ENCODE measurements at regions of chr1 and their contacts with region 1.

Region 1: DNA sequence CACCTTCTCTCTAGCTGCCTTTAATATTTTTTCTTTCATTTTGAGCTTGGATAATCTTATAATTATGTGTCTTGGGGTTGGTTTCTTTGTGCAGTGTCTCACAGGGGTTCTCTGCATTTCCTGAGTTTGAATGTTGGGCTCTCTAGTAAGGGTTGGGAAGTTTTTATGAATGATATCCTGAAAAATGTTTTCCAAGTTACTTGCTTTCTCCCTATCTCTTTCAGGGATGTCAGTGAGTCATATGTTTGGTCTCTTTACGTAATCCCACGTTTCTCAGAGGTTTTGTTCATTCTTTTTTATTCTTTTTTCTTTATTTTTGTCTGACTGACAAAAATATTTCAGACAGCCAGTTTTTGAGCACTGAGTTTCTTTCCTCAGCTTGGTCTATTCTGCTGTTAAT is 55.4 kb upstream of the CCDC190 start:
- DNase-seq: no peak
- H3K4me3 ChIP-seq: no peak overlapping the region
- H3K27ac ChIP-seq: peak overlapping the region; percentile 53 to 99
- H3K4me1 ChIP-seq: peaks cover 0 to 34% of the 10 kb centered on the region in 2 experiments; a peak in 2 of 4 replicates
- H3K27me3 ChIP-seq: no peaks in the 10 kb centered on the region
- CTCF ChIP-seq: no peak
- EP300 ChIP-seq: no peak
- RAD21 ChIP-seq: no peak

Region 2: DNA sequence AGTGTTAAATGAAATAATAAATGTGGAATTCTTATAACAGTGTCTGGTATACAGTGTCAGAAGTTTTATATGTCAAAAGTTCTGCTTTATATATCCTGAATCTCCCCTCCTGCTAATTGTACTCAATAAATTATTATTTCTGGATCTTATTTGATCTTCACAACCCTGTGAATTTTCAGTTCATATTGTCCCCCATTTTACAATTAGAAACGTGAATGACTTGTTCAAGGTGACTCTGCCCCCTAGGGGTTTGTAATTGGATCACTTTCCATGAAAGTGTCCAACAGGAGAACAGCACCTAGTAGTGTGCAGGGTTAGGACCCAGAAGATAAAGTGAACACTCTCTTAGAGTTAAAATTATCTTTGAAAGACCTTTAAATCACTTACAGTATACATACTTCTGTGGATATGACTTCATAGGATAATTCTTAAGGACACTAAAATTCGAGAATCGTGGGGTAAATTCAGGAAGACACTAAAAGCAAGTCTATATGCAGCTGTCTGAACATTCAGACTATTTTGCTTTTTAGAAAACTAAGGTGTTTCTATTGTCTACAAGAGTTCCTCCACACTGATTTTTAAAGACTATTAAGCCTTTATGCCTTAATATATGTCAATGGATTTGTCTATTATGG is 288.6 kb before region 1 on chr1:
- CTCF ChIA-PET with region 1: no interaction called
- POLR2A ChIA-PET with region 1: no interaction called
- DNase-seq: no peak
- H3K4me3 ChIP-seq: no peak overlapping the region
- H3K27ac ChIP-seq: peak overlapping the region in 1 of 2 experiments; percentile 18; a peak in 1 of 4 replicates
- H3K4me1 ChIP-seq: peaks cover 39 to 44% of the 10 kb centered on the region in 2 experiments
- H3K27me3 ChIP-seq: no peaks in the 10 kb centered on the region
- CTCF ChIP-seq: peak; percentile 71
- EP300 ChIP-seq: no peak
- RAD21 ChIP-seq: peak; percentile 58

Region 3: DNA sequence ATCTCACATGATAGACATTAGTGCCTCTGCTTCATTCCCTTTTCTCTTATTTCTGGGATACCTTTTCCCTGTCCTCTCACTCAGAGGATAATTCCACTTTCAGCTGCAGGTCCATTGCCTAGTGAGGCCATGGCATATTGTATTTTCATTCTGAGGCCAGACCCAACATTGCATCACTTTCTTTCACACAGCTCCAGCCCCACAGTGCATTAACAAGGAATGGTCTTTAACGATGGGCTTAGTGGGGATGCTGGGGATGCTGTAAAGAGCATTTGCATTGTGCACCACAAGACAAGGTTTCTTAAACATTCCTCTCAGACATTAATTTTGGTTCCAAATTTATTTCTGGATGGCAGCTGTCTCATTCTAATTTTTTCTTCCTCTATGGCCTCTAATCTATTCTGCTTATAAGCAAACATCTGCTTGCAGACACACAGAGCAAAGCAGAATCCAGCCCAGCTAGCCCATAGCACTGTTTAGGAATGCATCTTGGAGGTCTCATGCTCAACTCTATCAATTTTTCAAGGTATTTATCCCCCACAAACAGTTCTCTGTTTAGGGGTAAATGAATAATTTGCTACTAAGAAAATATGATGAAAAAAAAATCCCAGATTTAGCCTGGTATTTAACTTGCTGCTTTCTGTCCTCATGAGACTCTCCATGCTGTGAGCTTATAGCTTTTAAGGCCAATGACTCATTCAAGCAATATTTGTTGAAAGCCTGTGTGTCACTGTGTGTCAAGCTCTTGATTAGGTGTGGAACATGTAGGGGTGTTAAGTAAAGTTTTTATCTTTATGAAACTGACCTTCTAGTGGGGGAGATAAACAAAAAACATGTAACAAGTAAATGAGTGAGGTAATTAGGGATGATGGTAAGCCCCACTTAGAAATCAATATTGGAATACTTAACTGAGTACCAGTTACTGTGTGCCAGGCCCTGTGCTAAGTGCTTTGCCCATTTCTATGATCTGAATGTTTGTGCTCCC is 10.9 kb before region 1 on chr1:
- CTCF ChIA-PET with region 1: interaction called, 4 read pairs
- POLR2A ChIA-PET with region 1: interaction called, 11 read pairs
- DNase-seq: no peak
- H3K4me3 ChIP-seq: no peak overlapping the region
- H3K27ac ChIP-seq: peak overlapping the region; percentile 91 to 99
- H3K4me1 ChIP-seq: peaks cover 28 to 50% of the 10 kb centered on the region in 2 experiments
- H3K27me3 ChIP-seq: no peaks in the 10 kb centered on the region
- CTCF ChIP-seq: no peak
- EP300 ChIP-seq: peak; percentile 22 to 67; a peak in 2 of 4 replicates
- RAD21 ChIP-seq: no peak

Region 4: GRCh38 chr1:162930976-162931560 is 14.7 kb after region 1 on chr1:
- CTCF ChIA-PET with region 1: interaction called, 8 read pairs
- POLR2A ChIA-PET with region 1: interaction called, 73 read pairs
- DNase-seq: no peak
- H3K4me3 ChIP-seq: no peak overlapping the region
- H3K27ac ChIP-seq: peak overlapping the region; percentile 9 to 99; a peak in 3 of 4 replicates
- H3K4me1 ChIP-seq: peaks cover 0 to 53% of the 10 kb centered on the region in 2 experiments; a peak in 2 of 4 replicates
- H3K27me3 ChIP-seq: no peaks in the 10 kb centered on the region
- CTCF ChIP-seq: no peak
- EP300 ChIP-seq: peak in 1 of 2 experiments; percentile 34; a peak in 1 of 4 replicates
- RAD21 ChIP-seq: no peak

Region 5: GRCh38 chr1:162942916-162943567 is 26.6 kb after region 1 on chr1:
- CTCF ChIA-PET with region 1: interaction called, 7 read pairs
- POLR2A ChIA-PET with region 1: interaction called, 16 read pairs
- DNase-seq: no peak
- H3K4me3 ChIP-seq: no peak overlapping the region
- H3K27ac ChIP-seq: peak overlapping the region in 1 of 2 experiments; percentile 75; a peak in 2 of 4 replicates
- H3K4me1 ChIP-seq: peaks cover 9 to 36% of the 10 kb centered on the region in 2 experiments; a peak in 3 of 4 replicates
- H3K27me3 ChIP-seq: no peaks in the 10 kb centered on the region
- CTCF ChIP-seq: no peak
- EP300 ChIP-seq: no peak
- RAD21 ChIP-seq: no peak

Region 6: DNA sequence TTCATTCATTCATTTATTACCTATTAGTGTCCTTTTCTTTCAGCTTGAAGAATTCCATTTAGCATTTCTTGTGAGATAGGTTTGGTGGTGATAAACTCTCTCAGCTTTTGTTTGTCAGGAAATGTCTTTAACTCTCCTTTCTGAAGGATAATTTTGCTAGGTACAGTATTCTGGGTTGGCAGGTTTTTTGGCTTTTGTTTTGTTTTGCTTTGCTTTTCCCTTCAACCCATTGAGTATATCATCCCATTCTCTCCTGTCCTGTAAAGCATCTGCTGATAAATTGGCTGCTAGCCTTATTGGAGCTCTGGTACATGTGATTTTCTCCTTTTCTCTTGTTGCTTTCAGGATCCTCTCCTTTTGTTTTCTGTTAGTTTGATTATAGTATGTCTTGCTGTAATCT is 105.7 kb after region 1 on chr1:
- CTCF ChIA-PET with region 1: no interaction called
- POLR2A ChIA-PET with region 1: no interaction called
- DNase-seq: no peak
- H3K4me3 ChIP-seq: no peak overlapping the region
- H3K27ac ChIP-seq: no peak overlapping the region
- H3K4me1 ChIP-seq: no peaks in the 10 kb centered on the region
- H3K27me3 ChIP-seq: no peaks in the 10 kb centered on the region
- CTCF ChIP-seq: no peak
- EP300 ChIP-seq: no peak
- RAD21 ChIP-seq: no peak

Region 7: GRCh38 chr1:163076981-163077761 is 160.8 kb after region 1 on chr1:
- CTCF ChIA-PET with region 1: interaction called, 20 read pairs
- POLR2A ChIA-PET with region 1: interaction called, 300 read pairs
- DNase-seq: no peak
- H3K4me3 ChIP-seq: no peak overlapping the region; a peak in 1 of 4 replicates
- H3K27ac ChIP-seq: peak overlapping the region; percentile 91 to 99
- H3K4me1 ChIP-seq: peaks cover 23 to 29% of the 10 kb centered on the region in 2 experiments; a peak in 3 of 4 replicates
- H3K27me3 ChIP-seq: no peaks in the 10 kb centered on the region
- CTCF ChIP-seq: no peak
- EP300 ChIP-seq: no peak
- RAD21 ChIP-seq: no peak

Measured in SK-N-SH (cell line).